HEK293 (cell line): ENCODE measurements at regions of chr17 and their contacts with region 1.

Region 1: DNA sequence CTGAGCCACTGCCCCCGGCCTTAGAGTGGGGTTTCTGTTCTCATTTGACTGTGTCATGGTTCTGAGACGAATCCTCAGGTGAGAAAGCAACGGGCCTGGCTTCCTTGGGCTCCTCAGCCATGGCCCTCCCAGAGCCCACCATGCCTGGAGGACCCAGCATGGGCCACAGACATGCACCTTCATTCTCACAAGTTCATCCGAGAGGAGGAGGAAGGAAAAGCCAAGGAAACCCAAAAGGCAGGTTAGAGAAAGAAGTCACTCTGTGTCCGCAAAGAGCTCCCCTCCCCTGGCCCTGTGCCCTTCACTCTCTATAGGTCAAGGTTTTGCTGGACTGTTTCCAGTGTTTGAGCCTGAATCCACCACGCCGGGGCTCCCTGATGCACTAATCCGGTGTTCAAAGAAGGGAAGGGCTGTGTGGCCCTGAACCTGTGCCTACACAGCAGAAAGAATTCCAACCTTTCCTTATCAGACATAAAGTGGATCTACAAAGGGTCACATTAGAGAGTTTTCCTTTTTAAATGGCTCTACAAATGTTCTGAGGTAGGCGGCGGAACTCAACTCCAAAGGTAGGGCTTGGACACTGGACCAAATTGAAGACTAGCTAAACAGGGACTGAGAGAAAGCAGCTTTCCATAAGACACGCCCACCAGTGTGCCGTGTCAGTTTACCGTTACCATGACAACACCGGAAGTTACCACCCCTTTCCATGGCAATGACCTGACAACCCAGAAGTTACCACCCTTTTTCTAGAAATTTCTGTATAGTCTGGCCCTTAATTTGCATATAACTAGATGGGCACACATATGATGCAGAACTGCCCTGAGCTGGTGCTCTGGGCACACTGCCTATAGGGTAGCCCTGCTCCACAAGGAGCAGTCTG is 15.9 kb upstream of the PECAM1 start:
- H3K4me3 ChIP-seq: no peak overlapping the region
- H3K27ac ChIP-seq: no peak overlapping the region
- H3K4me1 ChIP-seq: no peaks in the 10 kb centered on the region
- CTCF ChIP-seq: no peak

Region 2: GRCh38 chr17:64320613-64321553 is 85.7 kb before region 1 on chr17:
- CTCF ChIA-PET with region 1: interaction called, 11 read pairs
- POLR2A ChIA-PET with region 1: no interaction called
- H3K4me3 ChIP-seq: no peak overlapping the region
- H3K27ac ChIP-seq: no peak overlapping the region
- H3K4me1 ChIP-seq: no peaks in the 10 kb centered on the region
- CTCF ChIP-seq: peak; percentile 48; the same call in 1 of the 2 replicates